ENCODE measurements at regions of chr11 and their contacts with region 1.

Region 1: DNA sequence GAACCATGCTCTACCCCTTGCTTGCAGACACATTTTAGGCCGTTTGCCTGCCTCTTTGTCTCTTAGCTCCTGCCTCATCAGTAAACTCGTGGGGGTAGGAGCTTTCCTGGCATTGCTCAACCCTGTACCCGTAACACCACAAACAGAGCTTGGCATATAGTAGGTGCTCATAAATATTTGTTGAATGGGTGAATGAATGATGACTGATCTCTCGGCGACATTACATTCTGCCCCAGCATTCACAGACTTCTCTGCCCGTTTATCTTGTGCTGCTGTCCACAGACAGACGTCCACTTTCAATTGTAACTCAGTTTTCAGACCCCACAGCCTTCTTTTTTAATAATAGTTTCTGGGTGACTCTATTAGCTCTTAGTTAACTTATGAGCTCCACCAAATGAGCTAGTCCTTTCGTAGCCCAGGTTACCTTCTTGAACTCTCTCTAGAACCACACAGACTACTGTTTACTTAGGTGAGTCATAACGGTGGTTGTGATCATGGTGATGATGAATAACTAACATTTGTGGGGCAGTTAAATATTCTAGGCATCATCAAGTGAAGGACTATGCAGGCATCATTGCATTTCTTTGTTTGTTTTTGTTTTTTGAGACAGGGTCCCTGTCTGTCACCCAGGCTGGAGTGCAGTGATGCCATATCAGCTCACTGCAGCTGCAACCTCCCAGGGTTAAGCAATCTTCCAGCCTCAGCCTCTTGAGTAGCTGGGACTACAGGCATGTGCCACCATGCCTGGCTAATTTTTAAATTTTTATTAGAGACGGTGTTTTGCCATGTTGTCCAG is 188.5 kb downstream of the ADAMTS15 start:
- DNase-seq: peak; percentile 95
- H3K4me3 ChIP-seq: no peak overlapping the region
- H3K27ac ChIP-seq: peak overlapping the region; percentile 90
- H3K4me1 ChIP-seq: peaks cover 50% of the 10 kb centered on the region
- H3K27me3 ChIP-seq: no peaks in the 10 kb centered on the region
- CTCF ChIP-seq: no peak

Region 2: DNA sequence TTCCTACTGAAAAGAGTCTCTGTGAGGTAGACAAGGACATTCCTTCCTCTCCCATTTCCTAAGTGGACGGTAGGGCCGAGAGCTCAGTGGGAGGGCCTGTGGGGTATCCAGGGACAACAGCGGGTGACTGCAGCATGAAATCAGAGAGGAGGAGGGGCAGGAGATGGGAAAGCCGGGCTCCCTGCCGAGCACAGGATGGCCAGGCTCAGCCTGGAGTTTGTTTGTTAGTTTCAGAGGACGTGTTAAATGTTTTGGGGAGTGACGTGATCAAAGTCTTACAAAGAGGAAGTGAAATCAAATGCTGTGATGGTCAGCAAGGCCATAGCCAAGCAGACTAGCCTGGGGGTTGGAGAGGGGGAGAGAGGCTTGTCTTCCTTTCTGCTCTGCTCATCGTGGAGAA is 35.8 kb before region 1 on chr11:
- CTCF ChIA-PET with region 1: no interaction called
- dilution Hi-C with region 1: loop called (anchors 5 kb)
- in situ Hi-C with region 1: no loop called
- intact Hi-C with region 1: no loop called
- DNase-seq: no peak
- H3K4me3 ChIP-seq: no peak overlapping the region
- H3K27ac ChIP-seq: no peak overlapping the region
- H3K4me1 ChIP-seq: no peaks in the 10 kb centered on the region
- H3K27me3 ChIP-seq: no peaks in the 10 kb centered on the region
- CTCF ChIP-seq: no peak

Region 3: GRCh38 chr11:130671801-130672700 is 35.1 kb after region 1 on chr11:
- CTCF ChIA-PET with region 1: interaction called, 3 read pairs
- dilution Hi-C with region 1: loop called (anchors 5 kb)
- in situ Hi-C with region 1: no loop called
- intact Hi-C with region 1: loop called (anchors 2 kb)
- DNase-seq: peak; percentile 61
- H3K4me3 ChIP-seq: no peak overlapping the region
- H3K27ac ChIP-seq: no peak overlapping the region
- H3K4me1 ChIP-seq: peaks cover 24% of the 10 kb centered on the region
- H3K27me3 ChIP-seq: no peaks in the 10 kb centered on the region
- CTCF ChIP-seq: no peak

Region 4: DNA sequence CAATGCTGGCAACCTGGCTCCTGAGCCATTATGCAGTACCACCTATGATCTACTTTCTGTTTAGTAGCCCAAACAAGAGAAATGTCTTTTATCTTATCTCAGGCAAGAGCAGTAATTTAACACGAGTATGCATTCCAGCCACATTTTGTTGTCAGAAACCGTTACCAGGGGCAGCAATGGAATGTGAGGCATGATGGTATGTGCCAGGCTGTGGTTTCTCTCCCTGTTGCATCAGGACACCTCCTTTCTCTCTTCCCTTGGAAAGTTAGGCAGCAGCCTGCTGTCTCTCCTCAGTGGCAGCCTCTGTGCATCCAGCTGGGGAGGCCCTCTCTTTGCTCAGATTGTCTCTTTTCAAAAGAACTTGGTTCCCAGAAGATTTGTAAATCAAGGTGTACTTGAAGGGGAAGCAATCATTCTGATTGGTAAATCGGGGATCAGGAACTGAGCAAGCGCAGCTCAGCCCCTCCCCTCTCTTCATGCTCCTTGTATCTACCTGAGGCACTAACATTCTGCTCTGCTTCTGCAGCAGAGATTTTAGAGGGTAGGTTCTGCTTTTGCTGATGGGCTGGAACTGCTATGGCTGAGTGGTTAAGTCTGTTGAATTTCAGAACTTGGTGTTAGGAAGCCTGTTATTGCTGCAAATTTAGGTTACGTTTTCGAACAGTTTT is 40.7 kb after region 1 on chr11:
- CTCF ChIA-PET with region 1: interaction called, 3 read pairs
- dilution Hi-C with region 1: loop called (anchors 5 kb)
- in situ Hi-C with region 1: no loop called
- intact Hi-C with region 1: loop called (anchors 2 kb)
- DNase-seq: peak; percentile 83
- H3K4me3 ChIP-seq: peak overlapping the region in 1 of 3 experiments; percentile 9
- H3K27ac ChIP-seq: peak overlapping the region; percentile 75
- H3K4me1 ChIP-seq: peaks cover 29% of the 10 kb centered on the region
- H3K27me3 ChIP-seq: no peaks in the 10 kb centered on the region
- CTCF ChIP-seq: no peak

Region 5: GRCh38 chr11:130726234-130727037 is 89.5 kb after region 1 on chr11:
- CTCF ChIA-PET with region 1: no interaction called
- dilution Hi-C with region 1: no loop called
- in situ Hi-C with region 1: no loop called
- intact Hi-C with region 1: loop called (anchors 10 kb)
- DNase-seq: no peak
- H3K4me3 ChIP-seq: no peak overlapping the region
- H3K27ac ChIP-seq: no peak overlapping the region
- H3K4me1 ChIP-seq: peaks cover 26% of the 10 kb centered on the region
- H3K27me3 ChIP-seq: no peaks in the 10 kb centered on the region
- CTCF ChIP-seq: no peak

Region 6: GRCh38 chr11:130827451-130828377 is 190.8 kb after region 1 on chr11:
- CTCF ChIA-PET with region 1: no interaction called
- dilution Hi-C with region 1: no loop called
- in situ Hi-C with region 1: no loop called
- intact Hi-C with region 1: loop called (anchors 5 kb)
- DNase-seq: peak; percentile 73
- H3K4me3 ChIP-seq: no peak overlapping the region
- H3K27ac ChIP-seq: no peak overlapping the region
- H3K4me1 ChIP-seq: no peaks in the 10 kb centered on the region
- H3K27me3 ChIP-seq: no peaks in the 10 kb centered on the region
- CTCF ChIP-seq: peak; percentile 65 to 80

Region 7: DNA sequence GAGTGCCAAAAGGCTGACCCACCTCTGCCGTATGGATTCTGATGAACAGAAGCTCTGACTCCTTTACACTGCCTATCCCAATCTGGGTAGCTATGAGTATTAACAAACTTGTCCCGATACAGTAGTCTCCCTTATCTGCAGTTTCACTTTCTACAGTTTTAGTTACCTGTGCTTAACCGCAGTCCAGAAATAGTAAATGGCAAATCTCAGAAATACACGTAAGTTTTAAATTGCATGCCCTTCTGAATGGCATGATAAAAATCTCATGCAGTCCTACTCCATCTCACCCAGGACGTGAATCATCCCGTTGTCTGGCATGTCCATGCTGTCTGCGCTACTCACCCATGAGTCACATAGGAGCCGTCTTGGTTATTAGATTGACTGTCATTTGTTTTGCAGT is 210.6 kb after region 1 on chr11:
- CTCF ChIA-PET with region 1: no interaction called
- dilution Hi-C with region 1: no loop called
- in situ Hi-C with region 1: no loop called
- intact Hi-C with region 1: loop called (anchors 5 kb)
- DNase-seq: peak; percentile 99
- H3K4me3 ChIP-seq: peak overlapping the region; percentile 2 to 27 (median 16)
- H3K27ac ChIP-seq: peak overlapping the region; percentile 98
- H3K4me1 ChIP-seq: peaks cover 37% of the 10 kb centered on the region
- H3K27me3 ChIP-seq: no peaks in the 10 kb centered on the region
- CTCF ChIP-seq: no peak

Measured in mammary epithelial cell (primary cell).